Activated naive CD4-positive, alpha-beta T cell treated with anti-CD3 and anti-CD28 coated beads for 36 hours (primary cell): ENCODE measurements at regions of chr1 and their contacts with region 1.

Region 1: GRCh38 chr1:27284425-27285273 is 37.3 kb upstream of the TMEM222 start:
- DNase-seq: peak; percentile 97
- H3K4me3 Mint-ChIP-seq: no peak overlapping the region
- H3K27ac Mint-ChIP-seq: no peak overlapping the region
- H3K4me1 Mint-ChIP-seq: peaks cover 2% of the 10 kb centered on the region
- H3K27me3 Mint-ChIP-seq: no peaks in the 10 kb centered on the region

Region 2: DNA sequence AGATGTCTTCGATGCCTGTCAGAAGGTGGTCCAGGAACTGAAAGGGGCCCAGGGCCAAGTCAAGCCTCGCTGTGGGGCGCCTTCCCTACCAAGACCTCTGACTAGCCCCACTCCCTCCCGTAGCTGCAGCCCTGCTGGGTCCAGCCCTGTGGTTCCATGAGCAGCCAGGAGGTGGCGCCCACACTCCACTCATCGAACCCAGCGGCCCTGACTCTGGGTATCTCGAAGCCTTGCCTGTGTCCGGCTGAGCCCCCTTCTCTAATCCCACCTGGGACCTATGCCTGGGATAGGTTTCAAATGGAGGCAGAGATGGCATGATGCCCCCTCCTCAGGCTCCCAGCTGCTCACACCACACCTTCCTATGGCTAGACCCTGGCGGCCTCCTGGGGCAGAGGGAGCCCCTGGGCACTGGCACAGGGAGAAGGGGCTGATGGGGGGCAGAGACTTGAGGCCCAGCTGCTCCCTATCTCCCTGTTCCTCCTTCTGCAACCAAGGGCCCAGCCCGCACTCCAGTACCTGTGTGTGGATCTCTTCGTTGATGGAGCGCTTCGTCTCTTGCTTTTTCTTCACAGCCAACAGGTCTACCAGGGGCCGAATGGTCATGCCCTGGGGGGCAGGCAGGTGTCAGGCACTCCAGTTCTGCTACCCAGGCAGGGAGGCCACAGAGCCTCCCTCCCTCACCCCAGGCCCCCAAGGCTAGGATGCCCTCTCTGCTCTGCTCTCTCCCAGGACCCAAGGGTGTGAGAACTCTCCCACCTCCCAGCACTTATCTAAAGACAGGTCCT is 181.8 kb before region 1 on chr1:
- CTCF ChIA-PET with region 1: interaction called, 37 read pairs
- intact Hi-C with region 1: loop called (anchors 1 kb)
- DNase-seq: peak; percentile 89
- H3K4me3 Mint-ChIP-seq: no peak overlapping the region
- H3K27ac Mint-ChIP-seq: no peak overlapping the region
- H3K4me1 Mint-ChIP-seq: peaks cover 12% of the 10 kb centered on the region
- H3K27me3 Mint-ChIP-seq: no peaks in the 10 kb centered on the region

Region 3: DNA sequence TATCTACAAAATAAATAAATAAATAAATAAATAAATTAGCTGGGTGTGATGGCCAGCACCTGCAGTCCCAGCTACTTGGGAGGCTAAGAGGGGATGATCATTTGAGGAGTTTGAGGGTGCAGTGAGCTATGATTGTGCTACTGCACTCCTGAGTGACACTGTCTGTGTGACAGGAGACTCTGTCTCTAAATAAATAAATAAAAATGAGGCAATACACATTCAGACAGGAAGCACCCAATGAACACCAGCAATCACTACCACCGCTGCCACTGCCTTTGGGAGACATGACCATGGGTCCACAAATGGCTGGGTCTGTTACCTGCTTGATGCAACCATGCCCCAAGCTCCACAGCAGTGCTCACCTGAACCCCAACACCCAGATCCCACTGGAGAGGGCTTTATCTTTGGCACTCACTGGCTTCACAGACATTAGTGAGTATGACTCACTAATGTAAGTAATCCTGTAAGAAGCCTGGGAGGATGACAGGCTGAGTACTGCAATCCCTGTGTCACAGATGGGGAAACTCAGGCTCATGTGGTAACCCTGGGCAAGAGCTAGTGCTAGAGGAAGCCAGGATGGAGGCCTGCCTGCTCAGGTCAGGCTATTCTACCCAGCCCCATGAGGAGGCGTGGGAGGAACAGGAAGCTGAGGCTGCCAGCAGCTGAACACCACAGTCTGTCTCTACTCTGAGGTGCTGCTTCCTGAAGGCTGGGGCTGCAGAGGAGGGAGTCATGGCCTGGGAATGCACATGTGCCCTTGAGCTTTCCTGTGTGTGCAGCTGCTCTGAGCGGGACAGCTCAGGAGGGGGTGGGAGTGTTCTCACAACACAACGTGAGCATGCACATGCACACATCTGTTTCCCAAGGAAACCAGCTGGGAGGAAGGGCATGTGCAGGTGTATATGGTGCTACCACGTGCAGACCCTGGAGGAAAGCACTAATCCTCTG is 172.7 kb before region 1 on chr1:
- CTCF ChIA-PET with region 1: interaction called, 8 read pairs
- intact Hi-C with region 1: loop called (anchors 2 kb)
- DNase-seq: peak; percentile 90
- H3K4me3 Mint-ChIP-seq: no peak overlapping the region
- H3K27ac Mint-ChIP-seq: peak overlapping the region; percentile 71
- H3K4me1 Mint-ChIP-seq: peaks cover 50% of the 10 kb centered on the region
- H3K27me3 Mint-ChIP-seq: no peaks in the 10 kb centered on the region

Region 4: DNA sequence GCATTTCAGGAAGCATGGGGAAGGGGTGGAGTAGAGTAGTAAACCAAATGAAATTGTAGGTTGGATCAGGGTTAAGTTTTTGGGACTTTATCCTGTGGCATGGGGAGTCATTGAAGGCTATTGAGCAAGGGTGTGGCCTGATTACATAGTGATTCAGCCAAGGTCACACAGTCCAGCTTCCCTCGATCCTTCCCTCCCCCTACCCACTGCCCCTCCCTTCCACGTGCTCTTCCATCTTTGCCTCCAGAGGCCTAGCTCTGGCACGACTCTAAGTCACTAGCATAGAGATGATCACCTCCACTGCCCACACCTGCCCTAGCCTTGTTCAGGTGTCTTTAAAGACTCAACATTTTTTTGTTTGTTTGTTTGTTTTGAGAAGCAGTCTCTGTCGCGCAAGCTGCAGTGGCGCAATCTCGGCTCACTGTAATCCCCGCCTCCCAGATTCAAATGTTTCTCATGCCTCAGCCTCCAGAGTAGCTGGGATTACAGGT is 92.6 kb before region 1 on chr1:
- CTCF ChIA-PET with region 1: interaction called, 77 read pairs
- intact Hi-C with region 1: no loop called
- DNase-seq: no peak
- H3K4me3 Mint-ChIP-seq: no peak overlapping the region
- H3K27ac Mint-ChIP-seq: no peak overlapping the region
- H3K4me1 Mint-ChIP-seq: no peaks in the 10 kb centered on the region
- H3K27me3 Mint-ChIP-seq: no peaks in the 10 kb centered on the region

Region 5: DNA sequence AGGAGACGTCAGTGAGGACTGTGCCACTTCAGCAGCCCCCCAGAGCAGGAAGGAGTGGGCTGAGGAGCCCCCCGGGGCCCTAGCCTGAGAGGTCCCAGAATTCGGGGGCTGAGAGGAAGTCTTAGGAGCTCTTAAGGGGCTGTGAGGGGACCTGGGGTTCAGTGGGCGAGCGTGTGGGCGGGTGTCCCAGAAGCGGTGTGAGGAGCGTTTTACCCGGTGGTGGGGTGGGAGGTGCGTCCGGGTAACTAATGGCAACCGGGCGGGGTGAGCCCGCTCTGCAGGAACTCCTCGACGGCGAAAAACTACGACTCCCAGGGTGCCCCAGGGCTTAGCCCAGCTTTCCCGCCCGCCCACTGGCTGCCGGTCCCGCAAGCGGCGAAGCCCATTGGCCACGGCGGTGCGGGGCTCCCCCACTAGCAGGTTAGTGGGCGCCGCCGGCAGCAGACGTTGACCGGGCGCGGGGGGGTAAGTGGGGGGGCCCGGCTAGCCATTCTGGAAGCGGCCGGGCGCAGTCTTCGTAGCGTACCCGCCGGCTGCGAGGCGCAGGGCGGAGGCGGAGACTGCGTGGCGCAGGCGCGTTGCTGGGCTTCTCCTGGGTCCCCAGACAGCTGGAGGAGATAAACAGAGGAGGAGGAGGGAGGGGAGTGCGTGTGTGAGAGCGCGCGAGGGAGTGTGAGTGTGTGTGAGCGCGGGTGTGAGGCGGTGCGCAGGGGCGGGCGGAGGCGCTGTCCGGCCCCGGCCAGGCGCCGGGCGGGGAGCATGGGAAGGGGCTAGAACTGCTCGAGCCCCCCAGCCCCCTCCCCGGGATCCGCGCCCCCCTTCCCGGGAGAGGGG is 50.4 kb before region 1 on chr1 and contains the start of gene WDTC1:
- CTCF ChIA-PET with region 1: no interaction called
- intact Hi-C with region 1: loop called (anchors 2 kb)
- DNase-seq: peak; percentile 98
- H3K4me3 Mint-ChIP-seq: peak within 1 kb of the TSS; percentile 99
- H3K27ac Mint-ChIP-seq: peak within 1 kb of the TSS; percentile 90
- H3K4me1 Mint-ChIP-seq: peaks cover 29% of the 10 kb centered on the region
- H3K27me3 Mint-ChIP-seq: no peaks in the 10 kb centered on the region
- total RNA-seq, gene WDTC1: 22.6 to 22.9 TPM

Region 6: DNA sequence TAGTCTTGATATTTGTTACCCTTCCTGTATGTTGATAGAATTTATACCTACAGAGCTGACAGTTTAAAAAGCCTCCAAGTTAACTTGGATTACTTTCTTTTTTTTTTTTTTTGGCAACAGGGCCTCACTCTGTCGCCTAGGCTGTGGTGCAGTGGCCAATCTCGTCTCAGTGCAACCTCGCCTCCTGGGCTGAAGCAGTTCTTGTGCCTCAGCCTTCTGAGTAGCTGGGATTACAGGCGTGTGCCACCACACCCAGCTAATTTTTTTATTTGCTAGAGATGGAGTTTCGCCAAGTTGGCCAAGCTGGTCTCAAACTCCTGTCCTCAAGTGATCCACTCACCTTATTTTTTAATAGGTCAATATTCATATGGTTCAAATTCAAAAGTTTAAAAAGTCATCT is 17.5 kb before region 1 on chr1:
- CTCF ChIA-PET with region 1: interaction called, 13 read pairs
- intact Hi-C with region 1: no loop called
- DNase-seq: no peak
- H3K4me3 Mint-ChIP-seq: no peak overlapping the region
- H3K27ac Mint-ChIP-seq: no peak overlapping the region
- H3K4me1 Mint-ChIP-seq: peaks cover 3% of the 10 kb centered on the region
- H3K27me3 Mint-ChIP-seq: no peaks in the 10 kb centered on the region

Region 7: GRCh38 chr1:27300341-27301051 is 15.8 kb after region 1 on chr1:
- CTCF ChIA-PET with region 1: interaction called, 12 read pairs
- intact Hi-C with region 1: no loop called
- DNase-seq: peak; percentile 84
- H3K4me3 Mint-ChIP-seq: no peak overlapping the region
- H3K27ac Mint-ChIP-seq: no peak overlapping the region
- H3K4me1 Mint-ChIP-seq: no peaks in the 10 kb centered on the region
- H3K27me3 Mint-ChIP-seq: no peaks in the 10 kb centered on the region

Region 8: DNA sequence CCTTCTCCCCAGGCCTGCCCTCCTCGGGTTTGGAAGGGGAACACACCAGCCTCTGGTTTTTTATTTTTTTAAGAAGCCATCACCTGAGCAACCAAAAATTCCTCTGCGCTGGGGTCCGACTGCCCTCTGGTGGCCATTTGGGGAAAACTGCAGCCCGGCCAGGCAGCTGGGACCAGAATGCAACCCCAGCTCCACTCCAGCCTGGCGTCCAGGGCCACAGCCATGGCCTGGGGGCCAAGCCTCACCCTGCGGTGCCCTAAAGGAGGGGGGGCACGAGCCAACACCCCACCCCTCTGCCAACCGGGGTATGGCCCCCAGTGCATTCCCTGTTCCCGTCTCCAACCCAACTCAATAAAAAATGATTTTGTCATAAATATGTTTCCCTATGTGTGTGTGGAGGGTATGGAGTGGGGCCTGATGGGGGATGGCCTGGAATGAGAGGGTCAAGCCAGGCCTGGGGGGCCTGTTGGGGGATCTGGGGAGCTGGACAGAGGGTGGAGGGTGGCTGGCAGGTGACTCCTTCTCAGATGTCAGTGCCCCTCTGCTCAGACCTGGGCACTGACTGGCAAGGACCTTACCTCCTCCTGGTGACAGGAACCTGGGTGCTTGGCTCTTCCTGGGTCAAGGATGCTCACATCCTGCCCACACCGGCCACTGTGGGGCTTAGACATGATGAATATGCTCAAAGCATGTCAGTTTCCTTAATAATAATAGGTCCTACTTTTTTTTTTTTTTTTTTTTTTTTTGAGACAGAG is 111.0 kb after region 1 on chr1:
- CTCF ChIA-PET with region 1: no interaction called
- intact Hi-C with region 1: no loop called
- DNase-seq: peak; percentile 89
- H3K4me3 Mint-ChIP-seq: no peak overlapping the region
- H3K27ac Mint-ChIP-seq: no peak overlapping the region
- H3K4me1 Mint-ChIP-seq: peaks cover 16% of the 10 kb centered on the region
- H3K27me3 Mint-ChIP-seq: no peaks in the 10 kb centered on the region